Aorta (tissue), 5 donors: ENCODE measurements at regions of chr19 and their contacts with region 1.

Region 1: DNA sequence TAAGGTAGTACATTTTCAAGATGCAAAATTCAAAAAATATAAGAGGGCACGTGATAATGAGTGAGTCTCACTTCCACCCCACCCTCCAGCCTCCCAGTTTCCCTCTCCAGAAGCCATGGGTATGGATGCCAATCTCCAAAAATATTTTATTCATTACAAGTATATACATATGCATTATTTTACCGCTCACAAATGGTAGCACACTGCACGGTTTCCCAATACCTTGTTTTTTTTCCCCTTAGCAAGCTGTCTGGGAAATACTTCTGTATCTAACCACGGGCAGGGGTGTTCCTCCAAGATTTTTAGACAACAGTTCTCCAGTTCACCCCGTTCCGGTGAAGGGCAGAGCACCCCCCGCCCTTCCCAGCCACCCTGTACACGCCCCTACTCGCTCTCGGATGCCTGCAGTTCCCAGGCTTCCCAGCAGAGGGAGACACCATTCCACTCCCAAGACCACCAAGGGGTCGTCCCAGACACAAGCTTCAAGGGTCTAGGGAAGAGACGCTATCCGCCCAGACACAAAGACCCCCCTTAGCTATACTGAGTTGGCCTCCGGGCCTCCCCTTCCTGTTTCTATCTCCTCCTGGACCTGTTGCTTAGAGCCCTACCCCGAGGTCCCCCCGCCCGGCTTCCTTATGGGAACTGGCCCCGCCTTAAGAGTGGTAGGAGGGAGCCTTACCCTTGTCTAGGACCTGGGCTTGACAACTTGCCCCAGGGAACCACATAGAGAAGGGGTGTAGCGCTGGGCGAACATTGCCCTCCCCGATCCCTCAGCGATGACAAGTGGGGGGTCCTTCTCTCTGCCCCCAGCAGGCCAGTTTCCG is 1.1 kb upstream of the FXYD3 start:
- DNase-seq: peak; percentile 67 to 91
- ATAC-seq: peak; percentile 87
- H3K4me3 ChIP-seq: no peak overlapping the region
- H3K27ac ChIP-seq: no peak overlapping the region
- H3K4me1 ChIP-seq: no peaks in the 10 kb centered on the region
- H3K27me3 ChIP-seq: no peaks in the 10 kb centered on the region

Region 2: DNA sequence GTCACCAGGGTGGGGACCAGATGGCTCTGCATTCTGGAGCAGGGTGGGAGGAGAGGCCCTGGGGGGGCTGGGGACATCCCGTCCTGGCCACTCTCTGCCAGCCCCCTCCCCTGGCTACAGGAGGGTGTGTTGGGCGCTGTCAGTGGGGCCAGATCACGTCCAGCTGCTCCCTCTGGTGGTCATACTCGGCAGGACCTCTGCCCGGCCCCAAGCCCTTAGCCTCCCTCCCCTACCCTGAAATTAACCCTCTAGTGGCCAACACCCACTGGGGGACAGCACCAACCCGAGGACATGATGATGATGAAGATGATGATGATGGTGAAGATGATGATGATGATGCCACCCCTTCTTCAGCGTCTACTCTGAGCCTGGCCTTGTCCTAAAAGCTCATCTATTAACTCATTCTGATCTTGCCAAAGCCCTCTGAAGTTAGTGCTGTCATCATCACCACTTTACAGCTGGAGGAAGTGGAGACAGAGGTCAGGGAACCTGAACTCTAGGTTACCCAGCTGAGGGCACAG is 20.9 kb after region 1 on chr19:
- intact Hi-C with region 1: loop called (anchors 2 kb)
- DNase-seq: peak; percentile 87 to 95
- ATAC-seq: peak; percentile 86
- H3K4me3 ChIP-seq: no peak overlapping the region
- H3K27ac ChIP-seq: no peak overlapping the region
- H3K4me1 ChIP-seq: peaks cover 0 to 4% of the 10 kb centered on the region in 2 donors
- H3K27me3 ChIP-seq: no peaks in the 10 kb centered on the region